CD8-positive, alpha-beta memory T cell (primary cell): ENCODE measurements at regions of chrX and their contacts with region 1.

Region 1: DNA sequence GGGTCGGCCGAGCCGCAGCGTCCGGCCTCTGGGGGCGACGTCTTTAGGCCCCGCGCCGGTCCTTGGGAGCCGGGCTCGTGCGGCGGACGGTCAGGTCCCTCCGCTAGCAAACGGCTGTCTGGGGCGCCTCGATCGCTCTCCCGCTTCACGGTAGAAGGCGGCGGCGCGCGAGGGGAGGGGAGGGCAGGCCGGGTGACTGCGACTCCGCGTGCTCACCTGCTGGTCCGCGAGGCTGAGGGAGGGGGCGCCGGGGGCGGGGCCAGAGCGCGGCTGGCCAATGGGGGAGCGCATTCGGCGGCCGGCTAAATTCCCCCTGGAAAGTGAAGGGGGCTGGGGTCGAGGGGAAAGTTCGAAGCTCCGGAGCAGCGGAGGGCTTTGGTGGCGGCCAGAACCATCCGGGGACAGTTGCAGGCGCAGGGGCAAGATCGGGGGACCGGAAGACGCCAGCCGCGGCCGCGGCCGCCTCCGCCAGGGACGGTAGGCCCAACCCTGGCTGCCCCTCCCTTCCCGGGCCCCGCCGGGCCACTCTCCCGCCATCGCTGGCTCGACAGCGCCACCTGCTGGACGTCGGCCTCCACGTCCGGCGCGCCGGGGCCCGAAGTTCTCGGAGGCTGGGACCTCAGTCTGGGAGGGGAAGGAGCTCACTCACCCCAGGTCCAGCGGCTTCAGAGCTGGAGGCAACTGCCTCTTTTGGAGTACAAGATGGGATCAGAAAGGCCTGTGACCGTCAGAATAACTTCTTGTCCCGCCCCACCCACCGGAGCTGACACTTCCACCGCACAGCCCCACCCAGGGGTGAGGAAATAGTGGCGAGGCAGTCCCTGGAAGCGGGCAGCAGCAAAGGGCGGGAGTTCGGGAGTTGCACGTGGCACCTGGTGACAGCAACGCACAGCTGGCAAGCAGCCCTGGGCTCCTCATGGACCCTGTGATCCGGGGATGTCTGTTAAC is 49.9 kb downstream of the ELF4 start:
- DNase-seq: peak; percentile 71 to 81 (median 75)
- H3K4me3 ChIP-seq: peak overlapping the region; percentile 41
- H3K4me3 Mint-ChIP-seq: peak overlapping the region; percentile 54 to 91 (median 75)
- H3K27ac ChIP-seq: peak overlapping the region; percentile 16
- H3K27ac Mint-ChIP-seq: peak overlapping the region in 3 of 8 donors; percentile 78 to 93 (median 79)
- H3K4me1 ChIP-seq: peaks cover 4% of the 10 kb centered on the region
- H3K4me1 Mint-ChIP-seq: peaks cover 0 to 10% (median 0%) of the 10 kb centered on the region in 3 donors
- H3K27me3 ChIP-seq: no peaks in the 10 kb centered on the region
- H3K27me3 Mint-ChIP-seq: peaks cover 0 to 4% of the 10 kb centered on the region in 2 donors

Region 2: DNA sequence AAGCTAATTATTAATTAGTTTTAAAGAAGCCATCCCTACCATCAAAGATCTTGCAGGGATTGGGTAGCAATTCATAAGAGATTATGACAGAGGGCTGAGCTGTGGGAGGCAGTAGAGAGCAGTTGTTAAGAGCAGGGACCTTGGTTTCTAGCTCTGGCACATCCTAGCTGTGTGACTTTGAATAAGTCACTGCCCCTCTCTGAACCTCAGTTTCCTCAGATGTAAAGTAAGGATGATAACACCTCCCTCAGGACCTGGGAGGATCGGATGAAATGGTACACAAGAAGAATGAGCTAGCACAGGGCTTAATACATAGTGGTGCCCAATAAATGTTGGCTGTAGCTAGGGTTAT is 451.0 kb before region 1 on chrX:
- CTCF ChIA-PET with region 1: interaction called, 11 read pairs
- POLR2A ChIA-PET with region 1: no interaction called
- DNase-seq: no peak
- H3K4me3 ChIP-seq: no peak overlapping the region
- H3K4me3 Mint-ChIP-seq: no peak overlapping the region
- H3K27ac ChIP-seq: no peak overlapping the region
- H3K27ac Mint-ChIP-seq: no peak overlapping the region
- H3K4me1 ChIP-seq: peaks cover 5% of the 10 kb centered on the region
- H3K4me1 Mint-ChIP-seq: peaks cover 15 to 17% (median 16%) of the 10 kb centered on the region in 3 donors
- H3K27me3 ChIP-seq: no peaks in the 10 kb centered on the region
- H3K27me3 Mint-ChIP-seq: peaks cover 0 to 5% of the 10 kb centered on the region in 2 donors

Region 3: DNA sequence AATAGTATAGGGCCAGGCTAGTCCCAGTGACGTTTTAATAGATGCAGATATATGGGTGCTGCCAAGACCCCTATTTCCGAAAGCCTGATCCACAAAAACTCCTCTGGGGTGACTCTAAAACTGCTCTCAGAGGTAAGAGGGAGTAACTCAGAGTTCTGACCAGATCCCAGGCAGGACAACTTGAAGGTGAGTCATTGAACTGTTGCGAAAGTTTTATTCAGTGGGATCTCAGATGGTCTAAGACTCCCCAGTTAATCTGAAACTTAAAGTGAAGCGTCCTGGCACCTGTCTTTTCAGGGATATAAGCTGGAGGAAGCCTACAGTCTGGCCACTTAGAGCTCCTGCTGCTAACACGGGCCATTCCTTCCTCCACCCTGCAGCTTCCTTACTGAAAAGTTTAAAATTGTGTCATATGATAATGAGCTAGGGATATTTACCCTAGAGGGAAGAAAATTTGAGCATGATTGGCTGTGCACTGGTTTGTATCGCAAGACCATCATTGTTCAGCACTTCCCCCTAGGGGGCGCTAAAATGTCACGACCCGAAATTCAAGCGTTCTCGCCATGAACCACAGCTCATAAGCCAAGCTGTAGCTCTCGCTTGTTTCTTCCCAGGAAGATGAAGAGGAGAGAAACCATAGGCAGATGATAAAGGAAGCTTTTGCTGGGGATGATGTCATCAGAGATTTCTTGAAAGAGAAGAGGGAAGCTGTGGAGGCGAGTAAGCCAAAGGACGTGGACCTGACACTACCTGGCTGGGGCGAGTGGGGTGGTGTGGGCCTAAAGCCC is 134.9 kb before region 1 on chrX:
- CTCF ChIA-PET with region 1: interaction called, 51 read pairs
- POLR2A ChIA-PET with region 1: no interaction called
- DNase-seq: peak; percentile 51 to 77 (median 55)
- H3K4me3 ChIP-seq: no peak overlapping the region
- H3K4me3 Mint-ChIP-seq: no peak overlapping the region
- H3K27ac ChIP-seq: no peak overlapping the region
- H3K27ac Mint-ChIP-seq: peak overlapping the region in 2 of 8 donors; percentile 27 to 61
- H3K4me1 ChIP-seq: no peaks in the 10 kb centered on the region
- H3K4me1 Mint-ChIP-seq: peaks cover 3 to 6% (median 4%) of the 10 kb centered on the region in 3 donors
- H3K27me3 ChIP-seq: no peaks in the 10 kb centered on the region
- H3K27me3 Mint-ChIP-seq: peaks cover 0 to 3% of the 10 kb centered on the region in 2 donors

Region 4: GRCh38 chrX:130516123-130516522 is 455.7 kb after region 1 on chrX:
- CTCF ChIA-PET with region 1: no interaction called
- POLR2A ChIA-PET with region 1: no interaction called
- DNase-seq: no peak
- H3K4me3 ChIP-seq: no peak overlapping the region
- H3K4me3 Mint-ChIP-seq: no peak overlapping the region
- H3K27ac ChIP-seq: no peak overlapping the region
- H3K27ac Mint-ChIP-seq: no peak overlapping the region
- H3K4me1 ChIP-seq: no peaks in the 10 kb centered on the region
- H3K4me1 Mint-ChIP-seq: no peaks in the 10 kb centered on the region
- H3K27me3 ChIP-seq: no peaks in the 10 kb centered on the region
- H3K27me3 Mint-ChIP-seq: peaks cover 15 to 29% of the 10 kb centered on the region in 2 donors